ENCODE measurements at regions of chr2 and their contacts with region 1.

Region 1: GRCh38 chr2:235493775-235494715 is at the start of gene AGAP1:
- DNase-seq: peak; percentile 88
- total RNA-seq, gene AGAP1: 18.7 TPM

Region 2: GRCh38 chr2:235135990-235136561 is 358.0 kb before region 1 on chr2:
- intact Hi-C with region 1: loop called (anchors 5 kb)
- DNase-seq: peak; percentile 87

Region 3: GRCh38 chr2:235433860-235434259 is 60.2 kb before region 1 on chr2:
- intact Hi-C with region 1: loop called (anchors 5 kb)
- DNase-seq: no peak

Region 4: GRCh38 chr2:235577404-235578330 is 83.6 kb after region 1 on chr2:
- intact Hi-C with region 1: loop called (anchors 5 kb)
- DNase-seq: no peak

Region 5: DNA sequence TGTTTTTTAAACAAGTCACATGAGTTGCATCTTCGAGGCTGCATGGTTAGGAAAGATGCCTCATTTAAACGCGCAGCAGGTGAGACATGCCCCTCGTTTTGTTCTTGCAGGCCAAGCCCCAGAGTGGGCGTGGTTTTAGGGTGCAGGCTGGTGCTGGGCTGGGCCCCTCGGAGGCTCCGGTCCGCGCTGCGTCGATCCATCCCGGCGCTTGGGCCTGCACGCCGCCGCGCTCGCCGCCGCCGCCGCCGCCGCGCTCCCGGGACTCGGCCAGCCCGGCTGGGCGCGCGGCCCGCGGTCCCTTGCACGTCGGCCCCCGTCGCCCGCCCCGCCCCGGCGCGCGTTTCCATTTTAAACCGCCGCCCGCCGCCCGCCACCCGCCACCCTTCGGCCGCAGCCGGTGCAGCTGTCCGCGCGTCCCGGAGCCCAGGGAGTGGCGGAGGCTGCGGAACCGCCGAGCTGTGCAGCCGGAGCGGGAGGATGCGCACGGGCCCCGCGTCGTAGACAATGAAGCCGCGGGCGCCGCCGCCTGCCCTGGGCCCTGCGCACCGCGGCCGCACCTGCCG is 175.3 kb after region 1 on chr2:
- intact Hi-C with region 1: loop called (anchors 5 kb)
- DNase-seq: peak; percentile 77

Measured in cardiac septum (tissue), 1 donor.